ENCODE measurements at regions of chr4 and their contacts with region 1.

Region 1: GRCh38 chr4:109433205-109434006 is at the start of gene SEC24B:
- DNase-seq: peak; percentile 96
- ATAC-seq: peak; percentile 97
- total RNA-seq, gene SEC24B: 24.1 TPM

Region 2: GRCh38 chr4:109486007-109486406 is 52.6 kb after region 1 on chr4:
- intact Hi-C with region 1: loop called (anchors 10 kb)
- DNase-seq: no peak
- ATAC-seq: no peak

Region 3: DNA sequence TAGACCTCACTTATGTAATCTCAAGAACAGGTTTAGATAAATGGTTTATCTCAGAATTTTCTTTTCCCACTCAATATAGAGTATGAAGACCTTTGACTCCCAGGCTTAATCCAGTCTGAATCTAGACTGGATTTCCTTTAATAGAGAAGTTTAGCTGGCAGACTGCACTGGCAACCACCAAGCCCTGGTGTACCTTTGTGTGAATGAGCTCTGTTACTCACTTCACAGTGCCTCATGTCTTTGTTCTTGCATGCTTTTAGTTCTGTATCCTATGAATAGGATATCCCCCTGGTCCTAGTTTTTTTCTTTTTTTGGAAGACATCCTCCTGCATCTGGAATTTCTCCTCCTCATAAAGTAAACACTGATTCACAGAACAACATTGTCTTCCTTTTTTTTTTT is 73.5 kb after region 1 on chr4:
- intact Hi-C with region 1: loop called (anchors 5 kb)
- DNase-seq: no peak
- ATAC-seq: no peak